Activated T-helper 1 cell treated with anti-CD3 and anti-CD28 coated beads, Interleukin-12 subunit alpha, Interleukin-12 subunit beta, Interleukin-2, Interleukin-4 antibody, amounts not matched to agents 30 ng/mL and 10 ng/mL and 1 ng/mL, durations not matched to agents 14 hours and 24 hours and 36 hours (primary cell): ENCODE measurements at regions of chr12 and their contacts with region 1.

Region 1: GRCh38 chr12:3872800-3873636 is at the start of gene PARP11:
- DNase-seq: peak; percentile 96
- H3K4me3 Mint-ChIP-seq: peak within 1 kb of the TSS; percentile 98
- H3K27ac Mint-ChIP-seq: peak within 1 kb of the TSS; percentile 99
- H3K4me1 Mint-ChIP-seq: peaks cover 52% of the 10 kb centered on the region
- H3K27me3 Mint-ChIP-seq: no peaks in the 10 kb centered on the region
- total RNA-seq, gene PARP11: 13.2 and 13.9 TPM in 2 replicates

Region 2: GRCh38 chr12:2890388-2891239 is 982.4 kb before region 1 on chr12 and contains the start of gene TULP3:
- intact Hi-C with region 1: loop called (anchors 5 kb)
- DNase-seq: peak; percentile 97
- H3K4me3 Mint-ChIP-seq: peak within 1 kb of the TSS; percentile 91
- H3K27ac Mint-ChIP-seq: peak within 1 kb of the TSS; percentile 88
- H3K4me1 Mint-ChIP-seq: peaks cover 27% of the 10 kb centered on the region
- H3K27me3 Mint-ChIP-seq: no peaks in the 10 kb centered on the region
- total RNA-seq, gene TULP3: 7.9 and 8.6 TPM in 2 replicates

Region 3: GRCh38 chr12:3752741-3753486 is 120.1 kb before region 1 on chr12 and contains the start of gene CRACR2A:
- intact Hi-C with region 1: loop called (anchors 2 kb)
- DNase-seq: peak; percentile 79
- H3K4me3 Mint-ChIP-seq: peak within 1 kb of the TSS; percentile 94
- H3K27ac Mint-ChIP-seq: peak within 1 kb of the TSS; percentile 98
- H3K4me1 Mint-ChIP-seq: peaks cover 57% of the 10 kb centered on the region
- H3K27me3 Mint-ChIP-seq: no peaks in the 10 kb centered on the region
- total RNA-seq, gene CRACR2A: 28.0 and 30.0 TPM in 2 replicates

Region 4: GRCh38 chr12:3777206-3777809 is 95.7 kb before region 1 on chr12:
- intact Hi-C with region 1: no loop called
- DNase-seq: no peak
- H3K4me3 Mint-ChIP-seq: no peak overlapping the region
- H3K27ac Mint-ChIP-seq: no peak overlapping the region
- H3K4me1 Mint-ChIP-seq: peaks cover 5% of the 10 kb centered on the region
- H3K27me3 Mint-ChIP-seq: no peaks in the 10 kb centered on the region

Region 5: GRCh38 chr12:3980504-3981272 is 107.7 kb after region 1 on chr12:
- intact Hi-C with region 1: no loop called
- DNase-seq: no peak
- H3K4me3 Mint-ChIP-seq: no peak overlapping the region
- H3K27ac Mint-ChIP-seq: peak overlapping the region; percentile 69
- H3K4me1 Mint-ChIP-seq: peaks cover 28% of the 10 kb centered on the region
- H3K27me3 Mint-ChIP-seq: no peaks in the 10 kb centered on the region

Region 6: GRCh38 chr12:4118017-4118510 is 245.0 kb after region 1 on chr12:
- intact Hi-C with region 1: loop called (anchors 5 kb)
- DNase-seq: no peak
- H3K4me3 Mint-ChIP-seq: peak overlapping the region; percentile 67
- H3K27ac Mint-ChIP-seq: peak overlapping the region; percentile 81
- H3K4me1 Mint-ChIP-seq: peaks cover 80% of the 10 kb centered on the region
- H3K27me3 Mint-ChIP-seq: no peaks in the 10 kb centered on the region

Region 7: DNA sequence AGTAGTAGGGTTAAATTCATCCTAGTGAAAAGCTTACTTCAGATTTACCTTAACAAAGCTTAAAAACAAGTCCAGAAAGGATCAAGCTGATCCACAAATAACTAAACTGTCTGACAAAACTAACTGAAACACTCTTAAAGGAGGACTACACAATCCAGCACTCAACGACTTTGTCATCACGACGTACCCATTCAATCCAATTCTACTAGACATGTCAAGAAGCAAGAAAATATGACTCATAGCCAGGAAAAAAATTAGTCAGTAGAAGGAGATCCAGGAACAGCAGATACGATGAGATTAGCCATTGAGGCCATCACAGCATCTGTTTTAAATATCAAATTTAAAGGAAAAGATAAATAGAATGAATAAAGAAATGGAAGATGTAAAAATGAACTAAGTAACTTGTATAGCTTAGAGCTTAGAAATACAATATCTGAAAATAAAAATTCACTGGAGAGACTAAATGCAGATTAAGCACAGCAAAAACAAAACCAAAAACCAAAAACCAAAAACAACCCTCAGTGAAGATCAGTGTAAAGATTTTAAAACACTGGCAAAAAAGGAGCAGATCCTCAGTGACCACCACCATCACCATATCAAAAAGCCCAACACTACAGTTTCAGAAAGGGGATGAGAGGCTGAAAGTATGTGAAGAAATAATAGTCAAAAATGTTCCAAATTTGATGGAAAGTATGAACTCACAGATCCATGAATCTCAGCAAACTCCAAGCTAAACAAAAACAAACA is 305.6 kb after region 1 on chr12:
- intact Hi-C with region 1: loop called (anchors 5 kb)
- DNase-seq: no peak
- H3K4me3 Mint-ChIP-seq: peak overlapping the region; percentile 41
- H3K27ac Mint-ChIP-seq: peak overlapping the region; percentile 75
- H3K4me1 Mint-ChIP-seq: peaks cover 21% of the 10 kb centered on the region
- H3K27me3 Mint-ChIP-seq: peaks cover 2% of the 10 kb centered on the region

Region 8: GRCh38 chr12:4506870-4507269 is 633.9 kb after region 1 on chr12:
- intact Hi-C with region 1: loop called (anchors 2 kb)
- DNase-seq: peak; percentile 29
- H3K4me3 Mint-ChIP-seq: peak overlapping the region; percentile 40
- H3K27ac Mint-ChIP-seq: peak overlapping the region; percentile 42
- H3K4me1 Mint-ChIP-seq: peaks cover 36% of the 10 kb centered on the region
- H3K27me3 Mint-ChIP-seq: no peaks in the 10 kb centered on the region

Region 9: DNA sequence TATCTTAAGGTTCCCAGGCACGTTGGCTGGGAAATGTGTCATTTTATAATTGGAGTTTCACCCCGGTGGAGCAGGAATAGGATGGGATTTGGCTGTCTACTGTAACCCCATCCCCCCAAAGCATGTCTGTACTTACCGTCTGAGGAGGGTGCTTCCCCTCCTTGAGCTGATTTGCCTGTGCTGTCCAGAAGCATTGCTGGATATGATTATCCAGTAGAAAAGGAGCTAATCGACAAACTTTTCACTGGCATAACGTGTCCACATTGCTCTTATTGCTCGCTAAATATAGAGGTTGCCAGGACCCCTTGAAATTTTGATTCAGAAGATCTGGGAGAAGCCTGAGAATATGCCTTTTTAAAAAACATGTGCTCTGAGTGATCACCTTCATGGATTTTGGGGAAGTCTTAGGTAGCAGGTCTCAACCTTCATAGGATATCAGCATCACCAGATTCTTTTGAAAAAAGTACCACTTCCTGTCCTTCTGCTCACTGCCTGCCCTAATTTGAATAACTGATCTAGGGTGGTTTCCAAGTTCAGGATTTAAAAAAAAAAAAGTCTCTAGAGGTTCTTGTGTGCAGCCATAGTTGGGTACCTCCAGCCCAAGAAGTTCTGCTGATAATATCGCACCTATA is 956.3 kb after region 1 on chr12:
- intact Hi-C with region 1: loop called (anchors 2 kb)
- DNase-seq: no peak
- H3K4me3 Mint-ChIP-seq: peak overlapping the region; percentile 83
- H3K27ac Mint-ChIP-seq: peak overlapping the region; percentile 99
- H3K4me1 Mint-ChIP-seq: peaks cover 71% of the 10 kb centered on the region
- H3K27me3 Mint-ChIP-seq: no peaks in the 10 kb centered on the region